Calu3 (cell line): ENCODE measurements at regions of chr2 and their contacts with region 1.

Region 1: DNA sequence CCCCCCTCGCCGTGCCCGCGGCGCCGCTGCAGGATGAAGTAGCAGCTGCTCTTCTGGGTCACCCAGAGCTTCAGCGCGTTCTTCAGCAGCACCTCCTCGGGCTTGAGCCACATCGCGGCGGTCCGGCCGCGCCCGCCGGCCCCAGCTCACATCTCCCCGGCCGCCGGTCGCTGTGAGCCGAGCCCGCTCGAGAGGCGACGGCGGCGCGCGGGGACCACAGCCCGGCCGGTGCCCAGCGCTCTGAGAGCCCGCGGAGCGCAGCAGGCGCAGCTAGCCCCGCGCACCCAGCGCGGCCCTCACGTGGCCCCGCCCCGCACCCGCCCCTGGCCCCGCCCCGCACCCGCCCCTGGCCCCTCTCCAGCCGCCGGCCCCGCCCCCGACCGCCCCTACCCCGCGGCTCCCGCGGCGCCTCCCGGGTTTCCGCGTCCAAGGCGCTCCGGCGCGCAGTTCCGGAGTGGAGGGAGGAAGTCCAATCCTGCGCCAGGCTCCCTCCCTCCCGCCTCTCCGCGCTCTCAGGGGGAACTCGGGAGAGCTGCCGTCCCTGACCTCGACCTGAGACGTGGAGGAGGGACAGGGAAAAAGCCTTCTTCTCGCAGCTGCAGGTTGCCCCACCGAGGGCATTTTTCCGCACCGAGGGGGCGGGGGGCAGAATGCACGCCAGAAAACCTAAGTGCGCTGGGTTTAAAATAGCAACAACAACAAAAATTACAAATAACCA is at the start of gene TBC1D8:
- DNase-seq: peak; percentile 83
- H3K4me3 Mint-ChIP-seq: peak within 1 kb of the TSS; percentile 78
- H3K27ac Mint-ChIP-seq: peak within 1 kb of the TSS; percentile 29
- H3K4me1 Mint-ChIP-seq: peaks cover 44% of the 10 kb centered on the region
- H3K27me3 Mint-ChIP-seq: no peaks in the 10 kb centered on the region
- CTCF ChIP-seq: no peak
- total RNA-seq, gene TBC1D8: 17.0 and 25.3 TPM in 2 replicates

Region 2: DNA sequence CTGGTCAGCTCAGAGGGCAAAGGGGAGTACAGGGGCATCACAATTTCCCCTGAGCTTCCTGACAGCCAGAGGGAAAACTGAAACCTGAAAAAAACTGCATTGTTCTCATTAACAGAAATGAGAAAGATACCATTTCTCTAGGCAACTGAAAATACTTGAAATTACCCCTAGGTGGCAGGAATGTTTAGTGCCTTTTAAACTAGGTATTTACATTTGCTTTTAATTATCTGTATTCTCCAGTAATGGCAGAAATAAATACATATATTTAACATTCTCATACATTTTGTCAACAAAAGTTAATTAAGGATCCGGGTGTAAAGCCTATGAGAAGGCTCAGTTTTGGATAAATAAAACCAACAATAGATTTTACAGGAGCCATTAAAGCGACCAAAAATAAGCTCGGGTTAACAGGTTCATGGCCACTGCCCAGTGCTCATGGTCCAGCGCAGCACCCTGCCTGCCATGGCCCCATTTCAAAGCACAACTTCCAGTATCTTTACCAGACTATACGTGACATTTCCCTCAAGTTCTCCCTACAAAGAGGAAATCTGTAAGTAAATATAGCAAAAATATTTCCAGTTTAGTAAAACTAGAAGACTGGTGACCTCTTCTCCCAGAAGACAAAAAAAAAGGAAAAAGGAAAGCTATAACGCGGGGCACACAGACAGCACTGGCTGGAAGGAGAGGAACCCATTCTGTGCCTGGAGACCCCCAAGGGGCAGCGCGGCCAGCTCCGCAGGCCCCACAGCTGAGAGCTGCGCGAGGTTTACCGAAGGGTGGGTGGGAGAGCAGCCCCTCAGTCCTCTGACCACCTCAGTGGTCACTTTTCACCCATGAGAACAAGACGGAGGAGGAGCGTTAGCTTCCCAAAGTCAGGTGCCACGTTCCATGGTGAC is 114.5 kb before region 1 on chr2:
- CTCF ChIA-PET with region 1: interaction called, 10 read pairs
- intact Hi-C with region 1: loop called (anchors 1 kb)
- DNase-seq: no peak
- H3K4me3 Mint-ChIP-seq: no peak overlapping the region
- H3K27ac Mint-ChIP-seq: no peak overlapping the region
- H3K4me1 Mint-ChIP-seq: peaks cover 10% of the 10 kb centered on the region
- H3K27me3 Mint-ChIP-seq: no peaks in the 10 kb centered on the region
- CTCF ChIP-seq: peak; percentile 52